Activated naive CD4-positive, alpha-beta T cell treated with anti-CD3 and anti-CD28 coated beads for 36 hours (primary cell): ENCODE measurements at regions of chr14 and their contacts with region 1.

Region 1: GRCh38 chr14:65412032-65412846 is at the start of gene FUT8:
- DNase-seq: peak; percentile 94
- H3K4me3 Mint-ChIP-seq: peak within 1 kb of the TSS; percentile 92
- H3K27ac Mint-ChIP-seq: peak within 1 kb of the TSS; percentile 95
- H3K4me1 Mint-ChIP-seq: peaks cover 32% of the 10 kb centered on the region
- H3K27me3 Mint-ChIP-seq: no peaks in the 10 kb centered on the region
- total RNA-seq, gene FUT8: 34.6 to 38.7 TPM

Region 2: GRCh38 chr14:64788668-64789067 is 623.6 kb before region 1 on chr14:
- CTCF ChIA-PET with region 1: no interaction called
- intact Hi-C with region 1: no loop called
- DNase-seq: peak; percentile 17
- H3K4me3 Mint-ChIP-seq: no peak overlapping the region
- H3K27ac Mint-ChIP-seq: no peak overlapping the region
- H3K4me1 Mint-ChIP-seq: no peaks in the 10 kb centered on the region
- H3K27me3 Mint-ChIP-seq: no peaks in the 10 kb centered on the region

Region 3: DNA sequence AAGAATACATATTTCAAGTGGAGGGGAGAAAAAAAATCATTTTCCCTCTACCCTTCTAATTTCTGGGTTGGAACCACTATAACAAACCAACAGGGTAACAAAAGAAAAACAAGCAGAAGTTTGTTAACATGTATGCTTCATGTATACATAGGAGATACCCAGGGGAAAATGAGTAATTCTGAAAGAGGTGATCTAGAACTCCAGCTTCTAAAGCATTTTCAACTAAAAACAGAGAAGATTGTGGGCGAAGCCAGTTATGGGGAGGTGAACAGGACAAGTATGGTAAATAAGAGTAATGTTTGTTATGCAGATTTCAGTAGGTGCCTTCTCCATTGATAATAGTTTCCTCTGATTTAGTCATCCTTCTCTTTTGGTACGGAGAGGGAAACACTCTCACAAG is 408.8 kb before region 1 on chr14:
- CTCF ChIA-PET with region 1: no interaction called
- intact Hi-C with region 1: no loop called
- DNase-seq: no peak
- H3K4me3 Mint-ChIP-seq: no peak overlapping the region
- H3K27ac Mint-ChIP-seq: no peak overlapping the region
- H3K4me1 Mint-ChIP-seq: peaks cover 30% of the 10 kb centered on the region
- H3K27me3 Mint-ChIP-seq: no peaks in the 10 kb centered on the region

Region 4: GRCh38 chr14:65164068-65164824 is 248.0 kb before region 1 on chr14:
- CTCF ChIA-PET with region 1: interaction called, 21 read pairs
- intact Hi-C with region 1: loop called (anchors 1 kb)
- DNase-seq: peak; percentile 57
- H3K4me3 Mint-ChIP-seq: no peak overlapping the region
- H3K27ac Mint-ChIP-seq: no peak overlapping the region
- H3K4me1 Mint-ChIP-seq: peaks cover 5% of the 10 kb centered on the region
- H3K27me3 Mint-ChIP-seq: no peaks in the 10 kb centered on the region

Region 5: GRCh38 chr14:65239143-65239937 is 172.9 kb before region 1 on chr14:
- CTCF ChIA-PET with region 1: interaction called, 10 read pairs
- intact Hi-C with region 1: no loop called
- DNase-seq: no peak
- H3K4me3 Mint-ChIP-seq: no peak overlapping the region
- H3K27ac Mint-ChIP-seq: no peak overlapping the region
- H3K4me1 Mint-ChIP-seq: peaks cover 4% of the 10 kb centered on the region
- H3K27me3 Mint-ChIP-seq: no peaks in the 10 kb centered on the region

Region 6: GRCh38 chr14:65336191-65336591 is 76.0 kb before region 1 on chr14:
- CTCF ChIA-PET with region 1: interaction called, 5 read pairs
- intact Hi-C with region 1: loop called (anchors 1 kb)
- DNase-seq: peak; percentile 77
- H3K4me3 Mint-ChIP-seq: peak overlapping the region; percentile 72
- H3K27ac Mint-ChIP-seq: peak overlapping the region; percentile 93
- H3K4me1 Mint-ChIP-seq: peaks cover 55% of the 10 kb centered on the region
- H3K27me3 Mint-ChIP-seq: no peaks in the 10 kb centered on the region

Region 7: DNA sequence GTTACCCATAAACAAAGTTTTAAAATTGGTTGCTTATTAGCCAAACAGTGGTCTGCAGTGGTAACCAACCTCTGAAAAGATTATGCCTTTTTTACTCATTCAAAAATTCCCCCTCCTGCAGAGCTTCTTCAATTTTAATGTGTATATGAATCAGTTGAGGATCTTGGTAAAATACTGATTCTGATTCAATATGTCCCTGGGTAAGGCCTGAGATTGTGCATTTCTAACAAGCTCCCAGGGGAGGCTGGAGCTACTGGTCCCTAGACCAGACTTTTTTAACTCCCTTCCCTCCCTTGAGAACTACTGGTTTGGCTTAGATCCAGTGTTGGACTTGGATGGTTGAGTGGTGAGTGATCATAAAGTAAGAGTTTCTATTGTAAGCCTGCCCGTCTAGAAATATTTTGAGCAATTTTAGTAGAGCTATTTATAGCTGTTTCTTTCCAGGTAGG is 90.5 kb after region 1 on chr14:
- CTCF ChIA-PET with region 1: interaction called, 3 read pairs
- intact Hi-C with region 1: loop called (anchors 5 kb)
- DNase-seq: no peak
- H3K4me3 Mint-ChIP-seq: no peak overlapping the region
- H3K27ac Mint-ChIP-seq: peak overlapping the region; percentile 43
- H3K4me1 Mint-ChIP-seq: peaks cover 36% of the 10 kb centered on the region
- H3K27me3 Mint-ChIP-seq: no peaks in the 10 kb centered on the region

Region 8: DNA sequence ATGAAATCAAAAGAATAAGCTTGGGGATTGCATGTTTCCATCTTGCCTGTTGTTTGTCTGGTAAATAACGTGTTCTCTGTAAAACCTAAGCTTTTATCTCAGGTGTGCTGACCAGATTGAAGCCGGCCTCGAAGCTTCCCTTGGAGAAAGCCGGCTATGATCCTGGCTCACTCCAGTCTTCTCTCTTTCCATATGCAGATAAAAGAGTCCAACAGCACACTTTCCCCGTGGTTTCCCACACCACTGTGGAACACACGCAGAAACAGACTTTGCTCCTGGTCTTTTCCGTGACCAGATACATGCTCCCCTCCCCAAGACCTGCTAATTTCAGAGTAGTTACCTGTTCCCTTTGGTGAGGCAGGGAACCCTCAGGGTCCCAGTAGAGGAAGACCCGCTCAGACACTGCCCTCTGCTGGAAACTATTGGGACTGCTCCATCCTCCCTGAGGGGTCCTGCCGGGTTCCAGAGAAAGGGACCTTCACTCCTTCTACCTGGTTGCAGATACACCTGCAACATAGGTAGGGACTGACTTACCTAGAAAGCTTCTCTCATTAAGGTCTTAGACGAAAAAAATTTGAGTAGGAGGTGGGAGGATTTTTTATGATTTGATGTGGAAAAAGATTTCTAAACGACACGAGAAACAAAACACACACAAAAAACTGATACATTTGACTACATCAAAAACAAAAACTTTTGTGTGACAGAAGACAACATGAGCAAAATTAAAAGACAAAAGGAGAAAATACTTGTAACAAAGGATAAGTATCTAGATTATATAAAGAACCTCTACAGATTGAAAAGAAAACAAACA is 658.5 kb after region 1 on chr14:
- CTCF ChIA-PET with region 1: interaction called, 25 read pairs
- intact Hi-C with region 1: loop called (anchors 1 kb)
- DNase-seq: peak; percentile 73
- H3K4me3 Mint-ChIP-seq: no peak overlapping the region
- H3K27ac Mint-ChIP-seq: no peak overlapping the region
- H3K4me1 Mint-ChIP-seq: no peaks in the 10 kb centered on the region
- H3K27me3 Mint-ChIP-seq: no peaks in the 10 kb centered on the region